HEK293 (cell line): ENCODE measurements at regions of chr3 and their contacts with region 1.

Region 1: DNA sequence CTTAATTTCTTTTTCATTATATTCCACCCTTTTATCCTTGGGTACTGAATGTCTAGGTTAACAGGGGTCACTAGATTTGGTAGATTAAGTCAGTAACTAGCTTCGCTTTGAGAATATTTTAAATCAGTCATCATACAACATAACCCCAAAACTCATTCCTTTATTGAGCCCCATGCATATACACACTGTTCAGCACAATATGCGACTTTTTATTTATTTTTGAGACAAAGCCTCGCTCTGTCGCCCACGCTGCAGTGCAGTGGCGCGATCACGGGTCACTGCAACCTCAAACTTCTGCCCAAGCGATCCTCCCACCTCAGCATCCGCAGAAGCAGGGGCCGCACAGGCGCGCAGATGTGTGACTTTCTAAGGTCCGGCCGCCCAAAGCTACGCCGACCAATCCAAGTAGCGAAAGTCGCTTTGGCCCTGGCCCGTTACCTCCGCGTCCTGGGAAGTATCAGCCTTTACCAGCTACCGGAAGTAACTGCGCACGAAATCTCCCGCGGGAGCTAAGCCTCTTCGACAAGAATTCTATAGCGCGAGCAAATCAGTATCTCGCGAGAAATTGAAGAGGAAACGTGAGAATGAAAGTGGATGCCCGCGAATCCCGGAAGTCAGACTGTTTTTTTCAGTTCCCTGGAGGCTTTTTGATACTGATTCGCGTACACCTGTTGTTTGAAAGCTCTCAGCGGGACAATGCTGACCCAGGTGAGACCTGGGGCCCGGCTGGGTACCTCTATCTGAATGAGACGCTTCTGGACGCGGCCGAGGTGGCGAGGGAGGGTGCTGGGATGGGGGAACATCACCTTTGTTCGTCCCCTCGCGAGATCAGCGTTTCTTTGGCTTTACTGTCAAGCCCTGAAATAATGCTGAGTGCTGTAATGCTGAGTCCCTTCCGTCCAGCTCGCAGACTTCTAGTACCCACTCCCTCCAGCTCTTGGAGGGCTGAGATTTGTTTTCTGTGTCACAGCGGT is at the starts of genes DHFR2 and NSUN3:
- H3K4me3 ChIP-seq: peak within 1 kb of the TSS; percentile 86
- H3K27ac ChIP-seq: peak within 1 kb of the TSS; percentile 86
- H3K4me1 ChIP-seq: no peaks in the 10 kb centered on the region
- CTCF ChIP-seq: no peak

Region 2: GRCh38 chr3:93961489-93961888 is 101.2 kb before region 1 on chr3:
- CTCF ChIA-PET with region 1: no interaction called
- POLR2A ChIA-PET with region 1: no interaction called
- H3K4me3 ChIP-seq: no peak overlapping the region
- H3K27ac ChIP-seq: no peak overlapping the region
- H3K4me1 ChIP-seq: no peaks in the 10 kb centered on the region
- CTCF ChIP-seq: no peak

Region 3: GRCh38 chr3:93973131-93974126 is 89.3 kb before region 1 on chr3 and contains the start of gene PROS1:
- CTCF ChIA-PET with region 1: interaction called, 5 read pairs
- POLR2A ChIA-PET with region 1: interaction called, 12 read pairs
- H3K4me3 ChIP-seq: peak within 1 kb of the TSS; percentile 58
- H3K27ac ChIP-seq: peak within 1 kb of the TSS; percentile 73
- H3K4me1 ChIP-seq: no peaks in the 10 kb centered on the region
- CTCF ChIP-seq: peak; percentile 53; the same call in 1 of the 2 replicates

Region 4: DNA sequence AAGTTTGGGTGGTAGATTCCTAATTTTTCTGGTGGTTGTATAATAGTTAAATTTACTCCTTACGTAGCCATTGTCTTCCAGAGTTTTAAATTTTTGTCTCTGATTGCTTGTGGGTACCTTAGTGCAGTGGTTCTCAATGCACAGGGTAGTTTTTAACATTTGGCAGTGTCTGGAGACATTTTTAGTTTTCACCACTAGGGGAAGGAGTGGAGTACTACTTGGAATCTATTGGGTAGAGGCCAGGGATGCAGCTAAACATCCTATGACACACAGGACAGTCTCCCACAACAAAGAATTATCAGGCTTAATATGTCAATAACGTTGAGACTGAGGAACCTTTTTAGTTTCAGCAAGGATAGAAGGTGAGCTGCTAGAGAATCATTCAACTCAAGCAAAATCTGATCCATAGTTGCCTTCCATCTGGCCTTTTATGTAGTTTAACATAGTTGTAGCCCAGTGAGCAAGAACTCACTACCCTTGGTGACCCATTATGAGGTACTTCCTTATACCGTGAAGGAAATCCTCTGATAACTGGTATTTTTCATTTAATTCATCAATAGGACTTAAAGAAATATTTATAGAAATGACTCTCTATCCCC is 25.7 kb before region 1 on chr3:
- CTCF ChIA-PET with region 1: no interaction called
- POLR2A ChIA-PET with region 1: no interaction called
- H3K4me3 ChIP-seq: no peak overlapping the region
- H3K27ac ChIP-seq: no peak overlapping the region
- H3K4me1 ChIP-seq: no peaks in the 10 kb centered on the region
- CTCF ChIP-seq: no peak

Region 5: DNA sequence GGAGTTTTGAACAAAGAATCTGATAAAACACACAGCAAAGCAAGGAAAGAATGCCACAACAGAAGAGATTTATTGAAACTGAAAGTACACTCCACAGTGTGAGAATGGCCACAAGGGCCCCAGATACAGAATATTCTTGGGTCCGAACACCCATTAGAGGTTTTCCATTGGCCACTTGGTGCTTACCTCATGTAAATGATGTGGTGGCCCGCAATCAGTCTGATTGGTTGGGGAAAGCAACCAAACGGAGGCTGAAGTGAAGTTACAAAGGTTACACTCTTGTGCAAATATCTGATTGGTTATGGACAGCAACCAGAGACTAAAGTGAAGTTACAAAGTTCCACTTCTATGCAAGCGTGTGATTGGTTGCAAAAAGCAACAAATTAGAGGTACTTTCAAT is 20.5 kb after region 1 on chr3:
- CTCF ChIA-PET with region 1: interaction called, 3 read pairs
- POLR2A ChIA-PET with region 1: interaction called, 11 read pairs
- H3K4me3 ChIP-seq: no peak overlapping the region
- H3K27ac ChIP-seq: no peak overlapping the region
- H3K4me1 ChIP-seq: no peaks in the 10 kb centered on the region; the same call in 1 of the 2 replicates
- CTCF ChIP-seq: no peak